ENCODE measurements at regions of chr2 and their contacts with region 1.

Region 1: GRCh38 chr2:27409321-27410073 is at the start of gene PPM1G:
- DNase-seq: peak; percentile 98
- ATAC-seq: peak; percentile 96
- H3K4me3 Mint-ChIP-seq: peak within 1 kb of the TSS; percentile 84
- H3K27ac Mint-ChIP-seq: peak within 1 kb of the TSS; percentile 88
- H3K4me1 Mint-ChIP-seq: peaks cover 35% of the 10 kb centered on the region
- H3K27me3 Mint-ChIP-seq: no peaks in the 10 kb centered on the region
- total RNA-seq, gene PPM1G: 115 to 121 TPM

Region 2: GRCh38 chr2:26970244-26970920 is 439.1 kb before region 1 on chr2 and contains the start of gene MAPRE3:
- CTCF ChIA-PET with region 1: no interaction called
- POLR2A ChIA-PET with region 1: no interaction called
- intact Hi-C with region 1: loop called in 1 of 2 experiments (anchors 1 kb)
- DNase-seq: peak; percentile 86
- ATAC-seq: peak; percentile 93
- H3K4me3 Mint-ChIP-seq: peak within 1 kb of the TSS; percentile 72
- H3K27ac Mint-ChIP-seq: peak within 1 kb of the TSS; percentile 5
- H3K4me1 Mint-ChIP-seq: peaks cover 15% of the 10 kb centered on the region
- H3K27me3 Mint-ChIP-seq: peaks cover 11% of the 10 kb centered on the region
- total RNA-seq, gene MAPRE3: 3.2 to 4.1 TPM

Region 3: DNA sequence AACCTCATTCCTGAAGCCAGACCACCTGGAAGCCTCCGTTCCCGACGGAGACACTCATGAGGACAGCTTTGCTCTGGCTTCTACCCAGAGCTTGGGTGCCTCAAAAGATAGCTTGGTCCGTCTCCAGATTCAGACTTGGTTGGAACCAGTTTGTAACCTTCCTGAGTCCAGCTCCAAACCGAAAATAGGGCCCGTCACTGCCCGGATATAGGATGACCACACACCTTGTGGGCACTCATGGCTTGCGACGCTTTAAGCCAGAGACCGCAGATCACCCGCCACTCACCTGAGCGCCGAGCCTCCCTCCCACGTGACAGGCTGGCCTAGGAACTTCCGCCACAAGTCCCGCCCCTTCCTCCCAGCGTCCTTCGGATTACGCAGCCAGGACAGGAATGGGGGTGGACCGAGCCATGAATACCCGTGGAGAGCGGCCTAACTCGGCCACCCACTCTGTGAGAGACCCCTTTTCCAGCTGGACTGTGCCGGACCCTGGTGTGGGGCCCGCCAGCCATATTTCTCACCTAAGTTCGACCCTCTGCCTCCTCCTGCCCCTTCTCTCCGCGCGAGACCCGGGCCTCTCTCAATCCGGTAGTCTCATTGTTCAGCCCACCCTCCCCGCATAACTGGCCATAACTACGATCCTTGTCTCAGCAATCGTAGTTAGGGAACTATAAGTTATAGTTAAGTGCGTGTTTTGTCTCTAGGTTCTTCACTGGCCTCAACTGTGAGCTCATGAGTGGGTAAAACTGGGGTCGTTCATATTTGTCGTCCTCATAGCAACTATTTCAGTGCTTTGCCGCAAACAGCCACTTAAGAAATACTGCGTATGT is 86.5 kb before region 1 on chr2 and contains the start of gene MPV17:
- CTCF ChIA-PET with region 1: no interaction called
- POLR2A ChIA-PET with region 1: no interaction called
- intact Hi-C with region 1: loop called in 1 of 2 experiments (anchors 1 kb)
- DNase-seq: peak; percentile 94
- ATAC-seq: peak; percentile 99
- H3K4me3 Mint-ChIP-seq: peak within 1 kb of the TSS; percentile 98
- H3K27ac Mint-ChIP-seq: peak within 1 kb of the TSS; percentile 98
- H3K4me1 Mint-ChIP-seq: peaks cover 17% of the 10 kb centered on the region
- H3K27me3 Mint-ChIP-seq: no peaks in the 10 kb centered on the region
- total RNA-seq, gene MPV17: 93.4 to 103 TPM

Region 4: GRCh38 chr2:27362678-27363420 is 46.6 kb before region 1 on chr2:
- CTCF ChIA-PET with region 1: no interaction called
- POLR2A ChIA-PET with region 1: no interaction called
- intact Hi-C with region 1: no loop called
- DNase-seq: no peak
- ATAC-seq: no peak
- H3K4me3 Mint-ChIP-seq: no peak overlapping the region
- H3K27ac Mint-ChIP-seq: no peak overlapping the region
- H3K4me1 Mint-ChIP-seq: peaks cover 32% of the 10 kb centered on the region
- H3K27me3 Mint-ChIP-seq: no peaks in the 10 kb centered on the region

Region 5: DNA sequence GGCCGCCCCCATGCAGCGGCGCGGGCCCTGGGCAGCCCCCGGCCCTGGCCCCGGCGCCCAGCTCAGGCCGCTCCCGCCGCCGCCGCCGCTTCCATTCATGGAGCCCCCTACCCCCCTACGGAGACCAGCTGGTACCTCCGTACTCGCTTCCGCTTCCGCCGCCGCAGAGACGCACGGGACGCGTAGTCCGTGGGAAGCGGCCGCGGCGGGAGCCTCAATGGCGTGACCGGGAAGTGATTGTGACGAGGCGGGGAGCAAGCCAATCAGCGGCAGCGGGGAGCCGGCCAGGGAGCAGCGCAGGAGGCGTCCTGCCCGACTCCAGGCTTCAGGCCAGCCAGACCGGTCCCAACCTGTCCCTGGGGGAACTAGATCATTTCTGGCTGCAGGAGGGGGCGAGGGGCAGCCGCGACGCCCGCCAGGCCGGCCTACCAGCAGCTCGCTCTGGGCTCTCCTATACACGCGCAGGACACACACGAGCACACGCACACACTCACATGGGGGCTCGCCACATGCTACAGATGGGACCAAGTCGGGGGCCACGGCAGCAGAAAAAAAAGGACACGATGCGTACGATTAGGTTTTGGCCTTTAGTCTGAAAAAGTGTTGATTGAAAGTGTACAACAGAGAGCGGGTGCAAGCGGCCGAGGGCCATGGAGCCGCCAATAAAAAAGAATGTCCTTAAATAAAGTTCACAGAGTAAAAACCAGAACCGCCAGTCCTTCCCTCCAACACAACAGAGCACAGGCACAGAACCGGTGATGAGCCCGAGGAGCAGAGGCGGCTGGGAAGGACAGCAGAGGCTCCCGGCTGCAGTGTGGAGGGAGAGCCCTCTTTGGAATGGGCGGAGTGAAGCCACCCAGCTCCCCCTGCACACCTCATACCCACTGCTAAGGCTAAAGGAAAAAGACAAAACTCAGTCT is 28.6 kb before region 1 on chr2 and contains the start of gene ZNF513:
- CTCF ChIA-PET with region 1: interaction called, 5 read pairs
- POLR2A ChIA-PET with region 1: no interaction called
- intact Hi-C with region 1: loop called (anchors 1 to 2 kb)
- DNase-seq: peak; percentile 95
- ATAC-seq: peak; percentile 91
- H3K4me3 Mint-ChIP-seq: peak within 1 kb of the TSS; percentile 89
- H3K27ac Mint-ChIP-seq: peak within 1 kb of the TSS; percentile 96
- H3K4me1 Mint-ChIP-seq: peaks cover 29% of the 10 kb centered on the region
- H3K27me3 Mint-ChIP-seq: no peaks in the 10 kb centered on the region
- total RNA-seq, gene ZNF513: 7.7 to 10.5 TPM

Region 6: GRCh38 chr2:27489498-27490397 is 80.3 kb after region 1 on chr2 and contains the start of gene IFT172:
- CTCF ChIA-PET with region 1: no interaction called
- POLR2A ChIA-PET with region 1: no interaction called
- intact Hi-C with region 1: loop called (anchors 1 to 2 kb)
- DNase-seq: peak; percentile 100
- ATAC-seq: peak; percentile 97
- H3K4me3 Mint-ChIP-seq: peak within 1 kb of the TSS; percentile 75
- H3K27ac Mint-ChIP-seq: peak within 1 kb of the TSS; percentile 63
- H3K4me1 Mint-ChIP-seq: peaks cover 23% of the 10 kb centered on the region
- H3K27me3 Mint-ChIP-seq: peaks cover 11% of the 10 kb centered on the region
- total RNA-seq, gene IFT172: 8.7 TPM

Region 7: GRCh38 chr2:27638037-27638637 is 228.6 kb after region 1 on chr2:
- CTCF ChIA-PET with region 1: no interaction called
- POLR2A ChIA-PET with region 1: no interaction called
- intact Hi-C with region 1: loop called in 1 of 2 experiments (anchors 2 kb)
- DNase-seq: peak; percentile 31
- ATAC-seq: peak; percentile 88
- H3K4me3 Mint-ChIP-seq: peak overlapping the region; percentile 50
- H3K27ac Mint-ChIP-seq: peak overlapping the region; percentile 95
- H3K4me1 Mint-ChIP-seq: peaks cover 38% of the 10 kb centered on the region
- H3K27me3 Mint-ChIP-seq: no peaks in the 10 kb centered on the region

Region 8: GRCh38 chr2:27771548-27772335 is 362.2 kb after region 1 on chr2 and contains the start of gene MRPL33:
- CTCF ChIA-PET with region 1: no interaction called
- POLR2A ChIA-PET with region 1: no interaction called
- intact Hi-C with region 1: loop called in 1 of 2 experiments (anchors 1 kb)
- DNase-seq: peak; percentile 96
- ATAC-seq: peak; percentile 98
- H3K4me3 Mint-ChIP-seq: peak within 1 kb of the TSS; percentile 99
- H3K27ac Mint-ChIP-seq: peak within 1 kb of the TSS; percentile 99
- H3K4me1 Mint-ChIP-seq: peaks cover 42% of the 10 kb centered on the region
- H3K27me3 Mint-ChIP-seq: no peaks in the 10 kb centered on the region
- total RNA-seq, gene MRPL33: 44.7 to 68.0 TPM